PC-3 (cell line): ENCODE measurements at regions of chr3 and their contacts with region 1.

Region 1: DNA sequence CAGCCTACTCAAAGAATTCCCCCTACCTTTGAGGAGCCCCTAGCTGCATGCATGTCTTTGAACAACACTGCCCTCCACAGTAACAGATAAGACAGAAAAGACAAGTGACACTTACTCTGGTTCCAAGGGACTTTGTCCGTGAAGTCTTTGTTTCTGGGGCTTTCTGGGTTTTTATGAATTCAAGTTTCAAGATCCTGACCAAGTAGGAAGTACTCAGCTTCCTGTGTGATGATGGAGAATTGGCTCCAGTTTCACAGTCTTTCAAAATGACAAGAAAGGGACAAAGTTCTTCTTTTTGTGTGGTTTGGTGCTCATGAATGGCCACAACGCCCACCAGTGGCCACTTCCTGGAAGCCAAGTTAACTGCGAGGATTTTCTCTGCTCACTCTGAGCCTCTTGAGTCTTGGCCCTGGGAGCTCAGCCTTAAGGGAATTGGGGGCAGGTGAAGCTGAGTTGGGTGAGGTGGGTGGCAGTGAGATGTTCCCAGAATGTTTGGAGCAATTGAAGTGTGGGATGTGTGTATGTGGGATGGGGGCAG is at the start of gene CCR1:
- DNase-seq: peak; percentile 78
- ATAC-seq: peak; percentile 79
- H3K4me3 ChIP-seq: no peak within 1 kb of the TSS
- H3K27ac ChIP-seq: no peak within 1 kb of the TSS
- H3K4me1 ChIP-seq: peaks cover 5% of the 10 kb centered on the region; the same call in 1 of the 2 replicates
- H3K27me3 ChIP-seq: no peaks in the 10 kb centered on the region
- CTCF ChIP-seq: peak; percentile 94
- total RNA-seq, gene CCR1: 0.15 TPM in 1 of 2 replicates, not detected in the other

Region 2: DNA sequence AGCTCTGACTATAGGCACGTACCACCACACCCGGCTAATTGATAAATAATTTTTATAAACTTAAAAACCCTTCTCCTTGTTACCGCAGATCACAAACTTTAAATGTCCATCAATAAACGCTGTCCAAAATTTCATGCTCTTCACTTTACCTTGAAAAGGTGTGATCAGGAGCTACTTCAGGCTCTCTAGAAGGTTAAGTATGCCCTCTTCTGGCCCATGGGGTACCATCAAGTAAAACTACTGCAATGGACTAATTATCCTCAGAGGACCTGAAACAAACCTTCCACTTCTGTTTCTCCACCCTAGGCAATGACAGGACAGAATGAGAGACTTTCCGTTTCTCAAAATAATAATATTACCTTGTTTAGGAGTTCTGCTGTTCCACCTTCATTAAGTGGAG is 375.5 kb before region 1 on chr3:
- CTCF ChIA-PET with region 1: no interaction called
- POLR2A ChIA-PET with region 1: no interaction called
- intact Hi-C with region 1: no loop called
- DNase-seq: peak; percentile 63
- ATAC-seq: peak; percentile 83
- H3K4me3 ChIP-seq: no peak overlapping the region
- H3K27ac ChIP-seq: no peak overlapping the region
- H3K4me1 ChIP-seq: no peaks in the 10 kb centered on the region
- H3K27me3 ChIP-seq: no peaks in the 10 kb centered on the region
- CTCF ChIP-seq: peak; percentile 66

Region 3: DNA sequence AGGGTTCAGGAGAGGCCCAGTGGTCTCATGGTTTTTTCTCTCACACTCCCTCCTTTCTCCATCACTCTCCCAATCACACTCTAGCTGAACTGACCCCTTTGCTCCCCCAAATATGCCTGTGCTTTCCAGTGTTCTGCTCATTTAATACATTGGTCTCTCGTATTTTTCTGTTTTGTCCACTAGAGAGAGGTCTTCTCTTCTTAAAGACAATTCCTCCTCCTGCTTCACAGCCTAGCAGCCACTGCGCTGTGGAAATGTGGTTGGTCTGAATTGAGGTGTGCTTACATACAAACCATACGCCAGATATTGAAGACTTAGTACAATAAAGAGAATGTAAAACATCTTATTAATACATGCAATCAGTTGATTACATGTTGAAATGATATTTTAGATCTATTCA is 120.4 kb before region 1 on chr3:
- CTCF ChIA-PET with region 1: interaction called, 3 read pairs
- POLR2A ChIA-PET with region 1: no interaction called
- intact Hi-C with region 1: loop called (anchors 1 kb)
- DNase-seq: peak; percentile 68
- ATAC-seq: peak; percentile 62
- H3K4me3 ChIP-seq: no peak overlapping the region
- H3K27ac ChIP-seq: no peak overlapping the region
- H3K4me1 ChIP-seq: peaks cover 36% of the 10 kb centered on the region
- H3K27me3 ChIP-seq: no peaks in the 10 kb centered on the region
- CTCF ChIP-seq: peak; percentile 69

Region 4: GRCh38 chr3:46102059-46102779 is 106.0 kb before region 1 on chr3:
- CTCF ChIA-PET with region 1: interaction called, 3 read pairs
- POLR2A ChIA-PET with region 1: no interaction called
- intact Hi-C with region 1: loop called (anchors 2 kb)
- DNase-seq: no peak
- ATAC-seq: no peak
- H3K4me3 ChIP-seq: no peak overlapping the region
- H3K27ac ChIP-seq: no peak overlapping the region
- H3K4me1 ChIP-seq: peaks cover 30% of the 10 kb centered on the region
- H3K27me3 ChIP-seq: no peaks in the 10 kb centered on the region
- CTCF ChIP-seq: no peak; the same call in 1 of the 2 replicates

Region 5: GRCh38 chr3:46299608-46300460 is 91.6 kb after region 1 on chr3:
- CTCF ChIA-PET with region 1: no interaction called
- POLR2A ChIA-PET with region 1: no interaction called
- intact Hi-C with region 1: no loop called
- DNase-seq: peak; percentile 46
- ATAC-seq: no peak
- H3K4me3 ChIP-seq: no peak overlapping the region
- H3K27ac ChIP-seq: no peak overlapping the region
- H3K4me1 ChIP-seq: peaks cover 10% of the 10 kb centered on the region; the same call in 1 of the 2 replicates
- H3K27me3 ChIP-seq: no peaks in the 10 kb centered on the region
- CTCF ChIP-seq: no peak